Activated T-helper 1 cell treated with anti-CD3 and anti-CD28 coated beads, Interleukin-12 subunit alpha, Interleukin-12 subunit beta, Interleukin-2, Interleukin-4 antibody, amounts not matched to agents 30 ng/mL and 10 ng/mL and 1 ng/mL, durations not matched to agents 14 hours and 24 hours and 36 hours (primary cell): ENCODE measurements at regions of chr17 and their contacts with region 1.

Region 1: DNA sequence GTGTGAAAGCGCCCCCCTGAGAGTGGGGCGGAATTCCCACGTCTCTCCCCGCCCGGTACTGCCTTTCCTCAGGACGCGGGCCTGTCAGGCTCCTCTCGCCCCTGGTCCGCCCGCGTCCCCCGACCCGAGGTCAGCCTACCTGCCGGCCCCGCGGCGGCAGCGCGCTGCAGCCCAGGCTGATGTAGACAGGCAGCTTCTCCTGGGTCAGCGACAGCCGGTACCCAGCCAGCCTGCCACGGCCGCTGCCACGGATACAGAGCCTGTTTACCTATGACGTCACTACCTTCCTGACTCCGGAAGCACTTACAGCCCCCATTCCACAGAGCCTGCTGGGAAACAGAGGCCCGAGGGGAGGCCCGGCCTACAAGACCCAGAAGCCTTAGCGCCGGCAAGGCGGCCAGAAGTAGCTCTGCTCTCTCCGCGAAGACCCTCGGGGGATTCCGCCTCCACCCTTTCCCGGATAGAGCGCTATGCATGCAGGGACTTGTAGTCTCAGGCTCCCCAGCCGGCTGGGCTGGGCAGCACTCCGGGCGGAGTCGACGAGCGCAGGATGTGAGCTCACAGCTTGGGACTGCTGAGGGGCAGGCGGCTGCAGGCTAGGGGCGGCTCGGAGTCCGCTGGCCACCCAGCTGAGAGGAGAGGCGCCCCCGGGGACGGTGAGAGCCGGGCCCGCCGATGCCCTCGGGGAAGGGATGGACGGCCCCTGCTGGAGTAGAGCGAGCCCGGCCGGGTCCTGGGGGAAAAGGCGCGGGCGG is at the starts of genes IFT20 and TNFAIP1:
- DNase-seq: peak; percentile 98
- H3K4me3 Mint-ChIP-seq: peak within 1 kb of the TSS; percentile 99
- H3K27ac Mint-ChIP-seq: peak within 1 kb of the TSS; percentile 97
- H3K4me1 Mint-ChIP-seq: peaks cover 45% of the 10 kb centered on the region
- H3K27me3 Mint-ChIP-seq: no peaks in the 10 kb centered on the region
- total RNA-seq, gene IFT20: 21.3 and 25.8 TPM in 2 replicates
- total RNA-seq, gene TNFAIP1: 35.1 and 39.9 TPM in 2 replicates

Region 2: GRCh38 chr17:28282596-28282995 is 52.8 kb before region 1 on chr17:
- intact Hi-C with region 1: loop called (anchors 2 kb)
- DNase-seq: no peak
- H3K4me3 Mint-ChIP-seq: no peak overlapping the region
- H3K27ac Mint-ChIP-seq: no peak overlapping the region
- H3K4me1 Mint-ChIP-seq: peaks cover 11% of the 10 kb centered on the region
- H3K27me3 Mint-ChIP-seq: peaks cover 42% of the 10 kb centered on the region

Region 3: GRCh38 chr17:28295677-28296578 is 39.5 kb before region 1 on chr17:
- intact Hi-C with region 1: loop called (anchors 1 kb)
- DNase-seq: no peak
- H3K4me3 Mint-ChIP-seq: no peak overlapping the region
- H3K27ac Mint-ChIP-seq: peak overlapping the region; percentile 85
- H3K4me1 Mint-ChIP-seq: peaks cover 15% of the 10 kb centered on the region
- H3K27me3 Mint-ChIP-seq: peaks cover 23% of the 10 kb centered on the region

Region 4: DNA sequence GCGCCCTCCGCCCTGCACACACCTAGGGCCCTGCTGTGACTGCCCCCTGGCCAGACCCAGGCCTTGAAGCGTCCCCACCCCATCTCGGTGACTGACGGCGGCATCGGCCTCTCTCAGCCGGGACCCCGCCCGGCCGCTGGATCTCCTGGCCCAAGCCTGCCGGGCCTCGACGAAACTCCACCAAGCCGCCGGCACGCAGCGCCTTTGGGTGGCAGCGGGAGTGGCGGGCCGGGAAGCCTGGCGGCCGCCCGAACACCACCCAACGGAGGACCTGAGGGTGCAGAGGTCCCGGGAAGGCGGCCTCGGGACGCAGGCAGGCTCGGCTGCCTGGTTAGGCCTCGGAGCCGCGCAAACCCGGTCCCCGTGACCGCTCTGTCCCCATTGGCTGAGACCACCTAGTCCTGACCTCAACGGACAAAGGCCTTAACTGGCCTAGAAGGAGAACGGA is 28.4 kb before region 1 on chr17:
- intact Hi-C with region 1: no loop called
- DNase-seq: no peak
- H3K4me3 Mint-ChIP-seq: no peak overlapping the region
- H3K27ac Mint-ChIP-seq: no peak overlapping the region
- H3K4me1 Mint-ChIP-seq: no peaks in the 10 kb centered on the region
- H3K27me3 Mint-ChIP-seq: peaks cover 27% of the 10 kb centered on the region

Region 5: DNA sequence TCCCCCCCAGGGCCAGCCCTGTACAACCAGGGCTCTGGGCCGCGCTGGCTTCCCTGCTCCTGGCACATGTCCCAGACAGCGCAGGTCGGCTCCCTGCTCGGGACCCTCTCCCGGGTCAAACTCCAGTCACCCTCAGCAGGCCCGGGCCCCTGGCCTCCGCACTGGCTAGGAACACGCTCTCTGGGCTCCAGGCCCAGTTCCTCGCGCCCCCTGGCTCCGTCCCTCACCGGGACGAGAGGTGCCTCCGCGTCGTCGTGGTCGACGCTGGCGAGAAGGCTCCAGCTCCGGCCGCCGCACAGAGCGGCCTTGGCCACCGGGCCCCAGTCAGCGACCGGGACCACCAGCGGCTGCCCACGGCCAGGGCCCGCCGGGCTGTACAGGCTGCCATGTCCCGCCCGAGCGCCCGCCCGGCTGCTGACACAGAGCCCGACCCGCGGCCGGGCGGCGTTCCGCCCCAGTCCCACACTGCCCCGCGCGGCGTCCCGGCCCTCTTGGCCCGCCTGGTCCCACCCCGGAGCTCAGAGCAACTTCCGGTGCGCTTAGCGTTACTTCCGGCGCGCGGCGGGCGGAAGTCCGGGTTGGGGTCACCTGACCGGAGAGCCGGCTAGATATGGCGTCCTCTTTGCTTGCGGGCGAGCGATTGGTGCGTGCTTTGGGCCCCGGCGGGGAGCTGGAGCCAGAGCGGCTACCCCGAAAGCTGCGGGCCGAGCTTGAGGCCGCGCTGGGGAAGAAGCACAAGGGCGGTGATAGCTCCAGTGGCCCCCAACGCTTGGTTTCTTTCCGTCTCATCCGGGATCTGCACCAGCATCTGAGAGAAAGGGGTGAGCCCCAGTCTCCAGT is 21.9 kb after region 1 on chr17 and contains the start of gene POLDIP2:
- intact Hi-C with region 1: loop called (anchors 1 kb)
- DNase-seq: peak; percentile 97
- H3K4me3 Mint-ChIP-seq: peak within 1 kb of the TSS; percentile 95
- H3K27ac Mint-ChIP-seq: peak within 1 kb of the TSS; percentile 92
- H3K4me1 Mint-ChIP-seq: peaks cover 32% of the 10 kb centered on the region
- H3K27me3 Mint-ChIP-seq: no peaks in the 10 kb centered on the region
- total RNA-seq, gene POLDIP2: 110 and 114 TPM in 2 replicates

Region 6: GRCh38 chr17:28371245-28372202 is 36.1 kb after region 1 on chr17 and contains the start of gene SARM1:
- intact Hi-C with region 1: loop called (anchors 1 kb)
- DNase-seq: peak; percentile 85
- H3K4me3 Mint-ChIP-seq: peak within 1 kb of the TSS; percentile 95
- H3K27ac Mint-ChIP-seq: peak within 1 kb of the TSS; percentile 98
- H3K4me1 Mint-ChIP-seq: peaks cover 14% of the 10 kb centered on the region
- H3K27me3 Mint-ChIP-seq: no peaks in the 10 kb centered on the region
- total RNA-seq, gene SARM1: 40.7 and 45.6 TPM in 2 replicates

Region 7: DNA sequence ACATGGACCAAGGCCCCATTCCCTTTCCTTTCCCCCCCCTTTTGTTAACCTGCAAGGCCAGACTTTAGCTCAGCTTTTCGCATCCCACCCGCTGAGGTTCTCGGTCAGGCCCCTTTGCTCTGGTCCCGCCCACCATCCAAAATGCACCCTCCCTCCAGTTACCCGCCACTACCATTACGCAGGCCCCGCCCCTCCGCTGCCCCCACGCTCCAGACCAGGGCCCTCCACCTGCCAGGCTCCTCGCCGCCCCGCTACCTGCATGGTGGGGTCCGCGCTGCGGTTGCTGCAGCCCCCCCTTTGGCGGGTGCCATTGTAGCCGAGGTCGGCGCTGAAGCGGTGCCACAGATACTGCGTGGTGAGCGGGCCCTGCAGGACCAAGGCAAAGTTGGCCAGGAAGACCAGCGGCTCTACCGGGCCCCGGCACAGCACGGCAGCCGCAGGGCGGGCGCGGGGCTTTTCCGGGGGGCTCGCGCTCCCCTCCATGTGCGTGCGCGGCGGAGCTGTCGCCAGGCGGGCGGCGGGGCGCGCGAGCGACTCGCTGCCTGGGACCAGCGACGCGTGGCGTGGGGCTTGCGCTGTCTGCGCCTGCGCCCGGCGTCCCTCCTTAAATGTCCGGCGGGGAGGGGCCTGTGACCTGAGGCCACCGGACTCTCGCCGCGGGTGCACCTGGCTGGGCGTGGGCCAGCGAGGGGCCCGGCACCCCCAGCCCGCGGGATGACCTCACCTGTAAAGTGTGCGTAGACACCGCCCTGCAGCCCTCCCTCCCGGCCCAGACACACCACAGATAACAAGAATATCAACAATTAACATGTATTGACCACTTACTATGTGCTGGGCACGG is 70.5 kb after region 1 on chr17 and contains the start of gene SLC46A1:
- intact Hi-C with region 1: loop called (anchors 5 kb)
- DNase-seq: peak; percentile 12
- H3K4me3 Mint-ChIP-seq: peak within 1 kb of the TSS; percentile 80
- H3K27ac Mint-ChIP-seq: peak within 1 kb of the TSS; percentile 44
- H3K4me1 Mint-ChIP-seq: peaks cover 9% of the 10 kb centered on the region
- H3K27me3 Mint-ChIP-seq: peaks cover 11% of the 10 kb centered on the region
- total RNA-seq, gene SLC46A1: 7.8 and 8.1 TPM in 2 replicates

Region 8: GRCh38 chr17:28717578-28718333 is 382.4 kb after region 1 on chr17 and contains the start of gene RAB34:
- intact Hi-C with region 1: loop called (anchors 2 kb)
- DNase-seq: no peak
- H3K4me3 Mint-ChIP-seq: peak within 1 kb of the TSS; percentile 65
- H3K27ac Mint-ChIP-seq: peak within 1 kb of the TSS; percentile 73
- H3K4me1 Mint-ChIP-seq: peaks cover 35% of the 10 kb centered on the region
- H3K27me3 Mint-ChIP-seq: peaks cover 23% of the 10 kb centered on the region
- total RNA-seq, gene RAB34: 17.6 and 18.2 TPM in 2 replicates